Stomach (tissue), 19 donors: ENCODE measurements at regions of chr13 and their contacts with region 1.

Region 1: GRCh38 chr13:74270018-74270417 is 135.8 kb upstream of the KLF12 start:
- DNase-seq: no peak
- H3K4me3 ChIP-seq: no peak overlapping the region
- H3K27ac ChIP-seq: no peak overlapping the region
- H3K4me1 ChIP-seq: no peaks in the 10 kb centered on the region
- H3K27me3 ChIP-seq: no peaks in the 10 kb centered on the region
- CTCF ChIP-seq: no peak
- EP300 ChIP-seq: no peak
- POLR2A ChIP-seq: no peak

Region 2: DNA sequence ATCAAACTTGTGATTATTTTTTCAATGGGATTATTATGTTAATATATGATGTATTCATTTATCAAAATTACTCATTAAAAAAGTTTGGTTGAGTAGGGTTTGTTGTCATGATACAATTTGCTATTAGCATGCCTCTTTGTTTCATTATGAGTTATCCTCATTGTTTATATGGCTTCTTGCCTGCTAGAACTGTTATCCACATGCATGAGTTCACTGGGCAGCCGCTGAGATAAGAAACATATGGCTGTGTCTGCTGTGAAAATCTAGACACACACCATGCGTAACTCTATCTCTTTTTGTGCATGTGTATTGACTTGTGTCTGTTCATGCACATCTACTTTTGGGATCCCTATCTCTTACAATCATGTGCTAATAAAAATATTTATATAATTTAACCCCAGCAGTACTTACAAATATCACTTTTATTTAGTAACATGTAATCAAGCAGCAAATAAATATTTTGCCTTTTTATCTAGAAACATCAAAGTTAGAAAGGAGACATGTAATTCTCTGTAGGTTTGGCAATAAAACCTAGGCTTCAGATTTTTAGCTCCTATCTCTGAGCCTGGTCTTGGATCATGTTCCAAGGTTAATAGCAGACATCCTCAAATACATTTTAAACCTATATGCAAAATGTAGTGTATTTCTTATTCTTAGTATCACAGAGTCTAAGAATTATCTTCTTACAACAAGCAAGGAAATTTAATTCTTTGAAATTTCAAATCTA is 124.6 kb before region 1 on chr13:
- intact Hi-C with region 1: loop called (anchors 10 kb)
- DNase-seq: peak in 1 of 2 donors; percentile 80
- H3K4me3 ChIP-seq: no peak overlapping the region
- H3K27ac ChIP-seq: no peak overlapping the region
- H3K4me1 ChIP-seq: peaks cover 0 to 8% (median 0%) of the 10 kb centered on the region in 4 donors
- H3K27me3 ChIP-seq: no peaks in the 10 kb centered on the region
- CTCF ChIP-seq: no peak
- EP300 ChIP-seq: no peak
- POLR2A ChIP-seq: no peak